ENCODE measurements at regions of chr1 and their contacts with region 1.

Region 1: GRCh38 chr1:22527555-22528296 is 35.6 kb upstream of the EPHA8 start:
- DNase-seq: peak; percentile 71
- H3K4me3 ChIP-seq: no peak overlapping the region; a peak in 1 of 4 replicates
- H3K27ac ChIP-seq: peak overlapping the region in 1 of 2 experiments; percentile 76; a peak in 2 of 4 replicates
- H3K4me1 ChIP-seq: peaks cover 0 to 35% of the 10 kb centered on the region in 2 experiments; a peak in 1 of 4 replicates
- H3K27me3 ChIP-seq: no peaks in the 10 kb centered on the region
- CTCF ChIP-seq: peak; percentile 27
- EP300 ChIP-seq: no peak; a peak in 1 of 4 replicates
- RAD21 ChIP-seq: peak; percentile 83

Region 2: DNA sequence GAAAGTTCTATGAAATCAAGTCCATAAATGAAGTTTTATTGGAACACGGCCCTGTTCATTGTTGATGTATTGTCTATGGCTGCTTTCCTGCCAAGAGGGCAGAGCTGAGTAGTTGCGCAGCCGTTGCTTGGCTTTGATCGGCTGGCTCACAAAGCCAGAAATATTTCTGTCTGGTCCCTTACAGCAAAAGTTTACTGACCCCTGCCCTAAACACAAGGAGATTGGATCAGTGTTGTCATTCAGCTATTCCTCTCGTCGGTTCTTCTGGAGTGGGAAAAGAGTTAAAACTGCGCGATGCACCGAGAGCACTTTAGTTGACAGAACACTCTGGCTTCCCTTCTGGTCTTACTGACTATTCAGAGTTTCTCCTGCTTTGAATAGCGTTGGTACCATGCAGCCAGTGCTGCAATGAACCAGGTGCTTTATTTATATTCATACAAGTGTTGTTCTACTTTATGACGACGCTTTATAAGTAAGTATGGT is 75.2 kb before region 1 on chr1:
- CTCF ChIA-PET with region 1: interaction called, 18 read pairs
- POLR2A ChIA-PET with region 1: no interaction called
- DNase-seq: no peak
- H3K4me3 ChIP-seq: peak overlapping the region; percentile 93 to 96
- H3K27ac ChIP-seq: peak overlapping the region; percentile 83 to 96
- H3K4me1 ChIP-seq: peaks cover 5 to 45% of the 10 kb centered on the region in 2 experiments; a peak in 3 of 4 replicates
- H3K27me3 ChIP-seq: no peaks in the 10 kb centered on the region
- CTCF ChIP-seq: no peak
- EP300 ChIP-seq: no peak
- RAD21 ChIP-seq: 0 out of 2 replicates have a peak, but pooled peaks have one; percentile 2

Region 3: DNA sequence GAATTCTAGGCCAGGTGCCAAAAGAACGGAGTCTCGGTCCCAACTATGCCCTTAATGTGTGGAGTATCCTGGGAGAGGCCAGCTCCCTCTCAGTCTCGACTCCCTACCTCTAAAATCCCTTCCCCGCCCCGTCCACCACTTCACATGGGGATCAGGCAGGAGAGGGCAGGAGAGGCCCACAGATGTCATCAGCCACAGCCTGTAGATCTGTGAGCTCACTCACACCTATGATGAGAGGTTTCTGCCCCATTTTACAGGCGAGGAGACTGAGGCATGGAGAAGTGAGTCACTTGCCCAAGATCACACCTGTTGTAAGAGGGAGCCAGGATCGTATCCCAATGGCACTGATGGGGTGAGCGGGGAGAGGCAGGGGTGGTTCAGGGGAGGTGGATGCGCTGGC is 15.2 kb after region 1 on chr1:
- CTCF ChIA-PET with region 1: interaction called, 33 read pairs
- POLR2A ChIA-PET with region 1: no interaction called
- DNase-seq: no peak
- H3K4me3 ChIP-seq: no peak overlapping the region
- H3K27ac ChIP-seq: no peak overlapping the region
- H3K4me1 ChIP-seq: no peaks in the 10 kb centered on the region; a peak in 1 of 4 replicates
- H3K27me3 ChIP-seq: 0 out of 2 replicates have a peak, but pooled peaks cover 10% of the 10 kb centered on the region
- CTCF ChIP-seq: no peak
- EP300 ChIP-seq: no peak
- RAD21 ChIP-seq: peak; percentile 35

Region 4: DNA sequence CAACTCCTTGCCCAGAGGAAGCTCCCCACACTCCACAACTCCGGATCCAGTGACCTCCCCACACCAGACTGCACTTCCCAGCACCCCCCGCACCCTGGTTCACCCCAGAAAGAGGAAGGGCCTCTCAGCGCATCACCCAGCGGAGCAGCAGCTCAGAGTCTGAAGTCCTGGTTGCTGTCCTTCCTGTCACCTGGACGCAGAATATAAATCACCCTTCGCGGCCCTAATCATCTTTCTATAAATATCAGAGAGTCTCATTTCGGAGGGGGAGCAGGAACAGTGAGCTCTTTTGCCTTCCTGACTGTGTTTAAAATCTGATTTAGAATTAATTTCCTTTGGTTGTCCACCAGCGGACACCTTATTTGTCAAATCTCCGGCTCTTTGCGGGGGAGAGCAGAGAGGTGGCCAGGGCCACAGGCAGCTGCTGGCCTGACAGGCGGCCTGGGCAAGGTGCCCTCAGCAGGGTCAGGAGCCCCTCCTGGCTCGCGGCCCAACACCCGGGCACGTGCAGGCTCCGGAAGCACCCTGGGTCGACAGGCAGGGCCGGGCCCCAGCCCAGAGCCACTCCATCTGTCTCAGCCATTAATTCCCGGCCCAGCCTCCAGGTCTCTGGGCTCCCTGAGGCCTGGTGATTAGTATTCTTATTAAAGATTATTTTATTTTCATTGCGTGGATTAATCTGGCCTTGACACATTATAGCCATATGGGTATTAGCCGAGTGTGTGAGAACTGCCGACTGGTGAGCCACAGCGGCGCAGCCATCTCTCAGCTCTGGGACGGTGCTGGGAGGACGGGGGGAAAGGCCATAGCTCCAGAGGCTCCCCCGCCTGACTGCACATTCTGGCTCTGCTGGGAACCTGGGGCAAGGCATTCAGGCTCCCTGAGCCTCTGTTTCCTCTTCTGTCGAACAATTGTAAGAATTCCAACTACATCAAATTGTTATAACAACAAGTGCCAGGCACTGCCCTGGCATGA is 55.2 kb after region 1 on chr1:
- CTCF ChIA-PET with region 1: interaction called, 32 read pairs
- POLR2A ChIA-PET with region 1: interaction called, 3 read pairs
- DNase-seq: peak; percentile 93
- H3K4me3 ChIP-seq: no peak overlapping the region
- H3K27ac ChIP-seq: peak overlapping the region in 1 of 2 experiments; percentile 91; a peak in 2 of 4 replicates
- H3K4me1 ChIP-seq: peaks cover 0 to 44% of the 10 kb centered on the region in 2 experiments; a peak in 2 of 4 replicates
- H3K27me3 ChIP-seq: no peaks in the 10 kb centered on the region; the same call in 1 of the 2 replicates
- CTCF ChIP-seq: no peak
- EP300 ChIP-seq: peak in 1 of 2 experiments; percentile 77; a peak in 2 of 4 replicates
- RAD21 ChIP-seq: peak; percentile 14; the same call in 1 of the 2 replicates

Region 5: GRCh38 chr1:22636353-22636752 is 108.6 kb after region 1 on chr1 and contains the start of gene C1QA:
- CTCF ChIA-PET with region 1: interaction called, 289 read pairs
- POLR2A ChIA-PET with region 1: no interaction called
- DNase-seq: no peak
- H3K4me3 ChIP-seq: no peak within 1 kb of the TSS
- H3K27ac ChIP-seq: no peak within 1 kb of the TSS
- H3K4me1 ChIP-seq: no peaks in the 10 kb centered on the region
- H3K27me3 ChIP-seq: peaks cover 21% of the 10 kb centered on the region
- CTCF ChIP-seq: no peak
- EP300 ChIP-seq: no peak
- RAD21 ChIP-seq: no peak
- polyA plus RNA-seq, gene C1QA: not detected in 2 replicates

Region 6: DNA sequence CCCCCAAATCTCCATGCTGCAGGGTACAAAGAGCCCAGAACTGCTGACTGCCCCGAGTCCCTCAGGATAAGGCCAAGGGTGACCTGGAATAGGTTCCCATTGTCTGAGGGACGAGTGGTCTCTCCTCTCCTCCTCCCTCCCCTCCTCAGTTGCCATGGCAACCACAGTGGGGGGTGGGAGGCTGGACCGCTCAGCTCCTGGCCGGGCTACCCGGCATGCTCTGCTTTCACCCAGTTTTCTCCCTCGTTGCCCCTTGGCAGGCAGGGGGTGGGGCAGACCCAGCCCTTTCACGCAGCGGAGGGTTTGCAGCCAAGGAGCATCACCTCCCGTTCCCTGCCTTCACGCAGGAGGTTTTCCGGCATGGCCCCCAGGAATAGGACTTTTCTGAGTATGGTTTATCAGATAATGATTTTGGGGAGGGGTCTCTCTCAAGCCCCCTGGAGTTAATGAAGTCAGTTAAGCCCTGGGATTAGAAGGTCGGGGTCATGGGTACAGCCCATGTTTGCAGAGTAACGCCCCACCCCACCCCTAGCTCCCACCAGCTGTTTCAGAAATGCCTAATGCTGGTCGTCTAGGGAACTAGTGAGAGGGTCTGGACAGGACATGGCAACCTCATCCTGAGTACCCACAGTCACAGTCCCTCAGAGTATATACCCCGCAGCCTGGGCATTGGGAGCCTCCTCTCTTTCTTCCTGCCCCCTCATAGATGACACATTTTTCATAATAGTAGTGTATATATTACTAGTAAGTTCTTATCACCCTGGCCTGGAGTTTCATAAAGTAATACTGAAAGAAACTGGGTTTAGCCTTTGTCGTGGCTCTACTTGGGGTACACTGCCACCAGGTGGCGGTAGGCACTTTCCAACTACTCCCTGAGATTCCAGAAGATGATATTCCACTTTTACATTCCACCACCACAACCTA is 146.0 kb after region 1 on chr1:
- CTCF ChIA-PET with region 1: interaction called, 12 read pairs
- POLR2A ChIA-PET with region 1: no interaction called
- DNase-seq: peak; percentile 87
- H3K4me3 ChIP-seq: no peak overlapping the region; a peak in 1 of 4 replicates
- H3K27ac ChIP-seq: no peak overlapping the region
- H3K4me1 ChIP-seq: no peaks in the 10 kb centered on the region; a peak in 1 of 4 replicates
- H3K27me3 ChIP-seq: peaks cover 12% of the 10 kb centered on the region; the same call in 1 of the 2 replicates
- CTCF ChIP-seq: peak; percentile 95
- EP300 ChIP-seq: no peak
- RAD21 ChIP-seq: peak; percentile 94

Region 7: GRCh38 chr1:22697980-22698379 is 170.3 kb after region 1 on chr1:
- CTCF ChIA-PET with region 1: no interaction called
- POLR2A ChIA-PET with region 1: no interaction called
- DNase-seq: no peak
- H3K4me3 ChIP-seq: no peak overlapping the region
- H3K27ac ChIP-seq: no peak overlapping the region
- H3K4me1 ChIP-seq: no peaks in the 10 kb centered on the region; a peak in 1 of 4 replicates
- H3K27me3 ChIP-seq: no peaks in the 10 kb centered on the region
- CTCF ChIP-seq: no peak
- EP300 ChIP-seq: no peak
- RAD21 ChIP-seq: no peak

Region 8: DNA sequence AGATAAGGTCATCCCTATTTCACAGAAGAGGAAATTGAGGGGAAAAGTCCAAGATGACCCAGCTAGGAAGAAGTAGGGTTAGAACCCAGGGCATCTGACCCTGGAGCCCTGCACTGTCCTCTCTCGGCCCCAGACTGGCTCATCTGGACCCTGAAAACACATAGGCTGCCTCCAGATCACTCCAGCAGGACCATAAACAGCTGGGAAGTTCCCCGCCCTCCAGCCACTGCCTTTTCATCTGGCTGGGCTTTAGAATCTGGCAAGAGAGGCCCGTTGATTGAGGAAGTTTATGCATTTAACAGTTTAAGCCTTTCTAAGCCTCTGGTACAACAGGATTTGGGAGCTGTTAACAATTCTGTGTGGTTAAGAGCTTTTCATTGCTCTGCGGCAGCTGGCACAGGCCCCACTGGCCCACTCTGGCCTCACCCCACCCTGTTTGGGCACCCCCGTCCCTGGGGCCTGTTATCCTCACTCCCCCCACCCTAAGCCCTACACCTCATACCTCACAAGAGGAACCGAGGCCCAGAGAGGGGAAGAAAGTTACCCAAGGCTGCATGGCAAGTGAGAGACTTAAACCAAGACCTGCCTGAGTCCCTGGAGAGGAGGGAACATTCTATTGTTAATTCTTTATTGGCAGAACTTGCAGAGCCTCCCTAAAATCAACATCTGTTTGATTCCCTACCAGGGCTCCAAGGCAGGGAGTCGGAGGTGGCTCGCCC is 267.1 kb after region 1 on chr1:
- CTCF ChIA-PET with region 1: no interaction called
- POLR2A ChIA-PET with region 1: no interaction called
- DNase-seq: peak; percentile 55
- H3K4me3 ChIP-seq: no peak overlapping the region
- H3K27ac ChIP-seq: no peak overlapping the region; a peak in 1 of 4 replicates
- H3K4me1 ChIP-seq: peaks cover 0 to 31% of the 10 kb centered on the region in 2 experiments; a peak in 2 of 4 replicates
- H3K27me3 ChIP-seq: no peaks in the 10 kb centered on the region
- CTCF ChIP-seq: no peak
- EP300 ChIP-seq: no peak
- RAD21 ChIP-seq: no peak